ENCODE measurements at regions of chr15 and their contacts with region 1.

Region 1: GRCh38 chr15:70097337-70098169 is at the start of gene TLE3:
- DNase-seq: peak; percentile 98
- ATAC-seq: peak; percentile 42
- H3K4me3 ChIP-seq: peak within 1 kb of the TSS; percentile 98
- H3K27ac ChIP-seq: peak within 1 kb of the TSS; percentile 78
- H3K4me1 ChIP-seq: peaks cover 45% of the 10 kb centered on the region
- H3K27me3 ChIP-seq: no peaks in the 10 kb centered on the region
- CTCF ChIP-seq: peak; percentile 33
- total RNA-seq, gene TLE3: 72.5 and 109 TPM in 2 replicates

Region 2: GRCh38 chr15:69468241-69469121 is 629.1 kb before region 1 on chr15:
- CTCF ChIA-PET with region 1: no interaction called
- POLR2A ChIA-PET with region 1: no interaction called
- intact Hi-C with region 1: loop called (anchors 5 kb)
- DNase-seq: peak; percentile 93
- ATAC-seq: peak; percentile 69
- H3K4me3 ChIP-seq: peak overlapping the region; percentile 42; the same call in 1 of the 2 replicates
- H3K27ac ChIP-seq: peak overlapping the region; percentile 90
- H3K4me1 ChIP-seq: peaks cover 47% of the 10 kb centered on the region
- H3K27me3 ChIP-seq: no peaks in the 10 kb centered on the region
- CTCF ChIP-seq: no peak

Region 3: GRCh38 chr15:69593981-69594966 is 503.3 kb before region 1 on chr15:
- CTCF ChIA-PET with region 1: interaction called, 3 read pairs
- POLR2A ChIA-PET with region 1: no interaction called
- intact Hi-C with region 1: loop called (anchors 1 kb)
- DNase-seq: peak; percentile 98
- ATAC-seq: peak; percentile 79
- H3K4me3 ChIP-seq: peak overlapping the region; percentile 40; the same call in 1 of the 2 replicates
- H3K27ac ChIP-seq: peak overlapping the region; percentile 98
- H3K4me1 ChIP-seq: peaks cover 53% of the 10 kb centered on the region
- H3K27me3 ChIP-seq: no peaks in the 10 kb centered on the region
- CTCF ChIP-seq: no peak

Region 4: DNA sequence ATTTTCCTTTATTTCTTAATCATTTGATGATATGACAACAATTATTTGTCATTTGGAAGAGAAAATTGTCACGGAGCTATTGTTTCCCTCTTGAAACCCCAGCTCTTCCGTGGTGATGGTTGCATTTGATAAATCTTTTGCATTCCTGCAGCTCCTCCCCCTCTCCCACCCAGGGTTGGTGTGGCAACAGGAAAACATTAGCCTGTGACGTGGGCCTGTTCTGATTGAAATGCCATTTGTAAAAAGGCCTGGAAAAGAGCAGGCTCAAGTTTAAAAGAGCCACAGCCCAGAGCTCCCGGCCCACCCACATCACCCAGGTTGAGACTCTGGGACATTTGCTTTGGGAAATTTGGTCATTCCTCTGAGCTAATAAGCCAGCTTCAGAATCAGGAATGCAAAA is 362.4 kb before region 1 on chr15:
- CTCF ChIA-PET with region 1: no interaction called
- POLR2A ChIA-PET with region 1: interaction called, 13 read pairs
- intact Hi-C with region 1: no loop called
- DNase-seq: no peak
- ATAC-seq: no peak
- H3K4me3 ChIP-seq: no peak overlapping the region
- H3K27ac ChIP-seq: no peak overlapping the region
- H3K4me1 ChIP-seq: peaks cover 10% of the 10 kb centered on the region
- H3K27me3 ChIP-seq: peaks cover 24% of the 10 kb centered on the region
- CTCF ChIP-seq: no peak

Region 5: DNA sequence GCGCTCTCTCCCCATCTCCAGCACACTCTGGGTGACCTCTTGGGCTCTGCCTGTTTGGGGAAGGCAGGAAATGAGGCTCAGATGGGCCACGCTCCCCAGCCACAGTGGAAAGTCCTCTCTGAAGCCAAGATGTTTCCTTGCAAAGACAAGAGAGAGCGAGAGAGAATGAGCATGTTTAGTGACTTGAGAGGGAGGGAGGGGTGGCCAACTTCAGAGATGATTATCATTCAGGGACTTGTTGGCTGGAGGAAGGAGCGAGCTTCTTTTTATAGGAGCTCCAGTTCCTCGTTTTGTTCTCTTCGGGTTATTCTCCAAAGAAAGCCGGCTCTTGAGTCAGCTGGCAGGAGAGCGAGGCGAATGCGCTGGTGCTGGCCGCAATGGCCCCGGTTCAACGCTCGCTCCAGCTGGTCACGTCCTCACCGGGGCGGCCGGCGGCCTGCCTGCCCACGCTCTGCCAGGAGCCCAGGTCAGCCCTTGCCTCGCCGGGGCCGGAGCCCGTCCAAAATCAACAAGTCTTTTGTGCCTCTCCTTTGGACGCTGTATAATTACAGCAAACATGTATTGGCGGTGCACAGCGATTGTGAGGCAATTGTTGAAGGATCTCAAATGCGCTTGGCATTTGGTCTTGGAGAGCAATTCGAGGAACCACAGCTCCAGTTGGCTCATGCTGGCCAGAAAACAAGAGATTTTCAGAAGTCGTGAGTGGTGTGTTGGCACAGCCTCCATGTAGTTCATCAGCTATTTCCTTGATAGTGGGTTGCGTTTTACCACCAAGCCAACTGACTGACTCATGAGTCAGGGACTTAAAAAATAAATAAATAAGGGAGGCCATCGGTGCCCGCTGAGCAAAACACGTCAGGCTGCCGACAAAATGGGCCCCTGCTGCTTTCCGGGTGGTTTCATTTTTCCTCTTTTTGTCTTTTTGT is 377.2 kb after region 1 on chr15:
- CTCF ChIA-PET with region 1: no interaction called
- POLR2A ChIA-PET with region 1: no interaction called
- intact Hi-C with region 1: loop called (anchors 5 kb)
- DNase-seq: peak; percentile 94
- ATAC-seq: peak; percentile 85
- H3K4me3 ChIP-seq: peak overlapping the region; percentile 55
- H3K27ac ChIP-seq: peak overlapping the region; percentile 93
- H3K4me1 ChIP-seq: peaks cover 30% of the 10 kb centered on the region
- H3K27me3 ChIP-seq: no peaks in the 10 kb centered on the region
- CTCF ChIP-seq: no peak

Measured in PC-3 (cell line).